CD4-positive, alpha-beta memory T cell (primary cell): ENCODE measurements at regions of chr1 and their contacts with region 1.

Region 1: DNA sequence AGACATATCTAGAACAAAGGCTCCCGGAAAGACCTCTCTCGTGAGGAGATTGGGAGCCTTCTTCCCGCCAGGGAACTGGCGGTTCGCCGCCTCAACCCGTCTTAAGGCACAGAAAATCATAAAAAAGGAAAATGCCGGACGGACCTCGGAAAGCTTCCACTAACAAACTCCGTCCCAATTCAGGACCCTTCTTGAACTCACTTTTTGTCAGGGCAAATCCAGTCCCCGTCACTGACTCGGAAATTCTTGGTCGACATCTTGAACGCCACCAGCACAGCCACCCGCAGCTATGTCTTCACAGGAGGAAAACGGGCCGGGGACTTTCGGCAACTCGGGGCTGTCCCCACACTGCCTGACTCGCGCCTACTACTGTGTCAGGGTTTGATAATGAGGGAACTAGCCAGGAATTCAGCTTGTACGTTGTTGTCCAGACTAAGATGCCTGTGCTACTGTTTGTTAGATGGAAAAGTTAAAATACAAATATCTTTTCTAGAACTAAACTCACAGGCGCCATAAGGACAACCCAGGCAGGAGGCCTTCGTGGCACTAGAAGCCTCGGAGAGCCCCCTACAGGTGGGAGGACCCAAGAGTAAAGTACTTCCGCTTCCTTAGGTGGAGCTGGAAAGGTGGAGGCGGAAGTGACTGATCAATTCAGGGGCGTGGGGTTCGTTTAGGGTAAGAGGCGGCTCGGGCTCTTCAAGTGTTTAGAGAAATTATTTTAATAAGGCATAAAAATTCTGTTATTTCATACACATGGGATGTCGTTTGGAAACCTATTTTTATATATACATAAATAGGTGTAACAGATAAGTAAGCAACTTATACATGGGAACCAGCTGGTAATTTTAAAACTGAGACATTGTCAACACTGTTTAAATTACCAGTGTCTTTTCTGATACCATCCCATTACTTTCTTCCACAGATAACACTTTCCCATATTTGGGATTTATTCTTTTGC is at the start of gene ZRANB2:
- DNase-seq: peak; percentile 93 to 96 (median 95)
- H3K4me3 ChIP-seq: peak within 1 kb of the TSS; percentile 62 to 95
- H3K4me3 Mint-ChIP-seq: peak within 1 kb of the TSS; percentile 91 to 100 (median 99)
- H3K27ac ChIP-seq: peak within 1 kb of the TSS; percentile 95
- H3K27ac Mint-ChIP-seq: peak within 1 kb of the TSS; percentile 97 to 100 (median 99)
- H3K4me1 ChIP-seq: peaks cover 29% of the 10 kb centered on the region
- H3K4me1 Mint-ChIP-seq: peaks cover 18 to 44% (median 27%) of the 10 kb centered on the region in 4 donors
- H3K27me3 ChIP-seq: no peaks in the 10 kb centered on the region
- H3K27me3 Mint-ChIP-seq: peaks cover 2 to 3% of the 10 kb centered on the region in 2 donors
- total RNA-seq, gene ZRANB2: 158 to 159 TPM

Region 2: GRCh38 chr1:70205434-70206118 is 875.4 kb before region 1 on chr1 and contains the start of gene LRRC40:
- CTCF ChIA-PET with region 1: interaction called, 7 read pairs
- POLR2A ChIA-PET with region 1: interaction called, 17 read pairs
- intact Hi-C with region 1: loop called (anchors 1 kb)
- DNase-seq: peak; percentile 95 to 98 (median 95)
- H3K4me3 ChIP-seq: peak within 1 kb of the TSS; percentile 68 to 93
- H3K4me3 Mint-ChIP-seq: peak within 1 kb of the TSS; percentile 97 to 99 (median 98)
- H3K27ac ChIP-seq: peak within 1 kb of the TSS; percentile 97
- H3K27ac Mint-ChIP-seq: peak within 1 kb of the TSS; percentile 99 to 100 (median 100)
- H3K4me1 ChIP-seq: peaks cover 71% of the 10 kb centered on the region
- H3K4me1 Mint-ChIP-seq: peaks cover 40 to 89% (median 62%) of the 10 kb centered on the region in 4 donors
- H3K27me3 ChIP-seq: no peaks in the 10 kb centered on the region
- H3K27me3 Mint-ChIP-seq: no peaks in the 10 kb centered on the region
- total RNA-seq, gene LRRC40: 11.3 to 11.6 TPM

Region 3: DNA sequence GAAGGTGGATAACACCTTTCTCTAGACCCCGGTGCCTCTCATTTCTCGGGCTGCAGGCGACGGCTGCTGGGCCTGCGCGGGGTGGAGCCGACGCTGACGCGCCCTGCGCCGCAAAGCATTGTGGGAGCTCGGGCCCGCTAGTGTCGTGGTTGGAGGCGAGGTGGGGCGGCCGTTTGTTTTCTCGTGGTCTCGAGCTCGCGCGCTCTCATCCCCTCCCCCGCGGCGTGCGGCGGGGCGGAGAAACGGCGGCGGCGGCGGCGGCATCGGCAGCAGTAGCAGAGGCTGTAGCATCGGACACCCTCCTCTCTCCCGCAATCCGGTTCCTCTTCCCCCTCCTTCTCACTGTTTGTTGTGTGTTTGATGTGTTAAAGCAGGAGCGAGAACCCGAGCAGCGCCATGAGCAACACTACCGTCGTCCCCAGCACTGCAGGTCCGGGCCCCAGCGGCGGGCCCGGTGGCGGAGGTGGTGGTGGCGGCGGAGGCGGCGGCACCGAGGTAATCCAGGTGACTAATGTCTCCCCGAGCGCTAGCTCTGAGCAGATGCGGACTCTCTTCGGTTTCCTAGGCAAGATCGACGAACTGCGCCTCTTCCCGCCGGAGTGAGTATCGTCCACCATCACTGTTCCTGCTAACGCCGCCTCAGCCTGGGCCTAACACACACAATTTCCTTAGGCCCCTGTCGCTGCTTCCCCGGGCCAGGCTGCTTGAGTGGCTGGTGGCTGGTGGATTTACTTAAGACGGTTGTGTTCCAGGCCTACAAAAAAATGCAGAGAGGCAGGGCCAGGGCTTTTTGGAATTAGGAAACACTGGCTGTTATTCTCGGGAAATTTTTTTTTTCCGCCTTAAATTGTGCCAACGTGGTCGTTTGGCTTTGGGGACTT is 859.5 kb before region 1 on chr1 and contains the start of gene SRSF11:
- CTCF ChIA-PET with region 1: interaction called, 12 read pairs
- POLR2A ChIA-PET with region 1: interaction called, 8 read pairs
- intact Hi-C with region 1: loop called (anchors 1 kb)
- DNase-seq: peak; percentile 95 to 96 (median 95)
- H3K4me3 ChIP-seq: peak within 1 kb of the TSS; percentile 67 to 70
- H3K4me3 Mint-ChIP-seq: peak within 1 kb of the TSS; percentile 85 to 98 (median 91)
- H3K27ac ChIP-seq: peak within 1 kb of the TSS; percentile 95
- H3K27ac Mint-ChIP-seq: peak within 1 kb of the TSS; percentile 92 to 99 (median 96)
- H3K4me1 ChIP-seq: peaks cover 49% of the 10 kb centered on the region
- H3K4me1 Mint-ChIP-seq: peaks cover 24 to 57% (median 44%) of the 10 kb centered on the region in 4 donors
- H3K27me3 ChIP-seq: no peaks in the 10 kb centered on the region
- H3K27me3 Mint-ChIP-seq: no peaks in the 10 kb centered on the region
- total RNA-seq, gene SRSF11: 359 to 374 TPM

Region 4: DNA sequence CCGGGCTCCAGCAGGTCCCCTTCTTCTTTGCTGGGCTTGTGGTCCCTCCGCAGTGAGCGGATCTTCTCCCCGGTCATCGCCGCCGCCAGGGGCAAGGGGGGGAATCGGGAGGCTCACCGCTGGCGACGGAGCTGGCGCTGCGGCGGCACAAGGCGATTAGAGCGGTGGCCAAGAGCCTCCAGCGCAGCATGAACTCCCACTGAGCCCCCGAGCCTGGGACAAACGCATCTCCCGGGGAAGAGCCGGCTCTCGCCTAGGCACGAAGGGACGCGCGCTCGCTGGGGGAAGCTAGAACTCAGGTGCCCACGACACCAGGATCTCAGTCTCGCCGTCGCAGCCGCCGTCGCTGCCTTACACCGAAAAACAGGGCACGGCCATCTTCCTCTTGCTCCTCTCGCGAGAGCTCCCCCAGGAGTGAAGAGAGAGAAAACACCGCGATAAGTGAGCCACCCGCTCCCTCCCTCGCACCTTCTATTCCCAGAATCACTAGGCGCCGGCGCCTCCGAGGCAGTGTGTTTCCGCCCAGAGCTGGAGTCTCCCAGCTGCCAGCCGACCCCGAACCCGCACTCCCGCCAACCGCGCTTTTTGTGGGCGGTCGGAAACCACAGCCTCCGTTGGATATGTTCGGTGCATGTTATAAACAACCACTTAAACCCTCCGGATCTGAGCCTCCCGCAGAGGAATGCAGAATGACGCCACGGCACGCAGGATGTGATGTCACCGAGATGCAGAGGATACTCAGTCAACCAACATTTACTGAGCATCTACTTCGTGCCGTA is 726.5 kb before region 1 on chr1 and contains the start of gene ANKRD13C:
- CTCF ChIA-PET with region 1: no interaction called
- POLR2A ChIA-PET with region 1: interaction called, 16 read pairs
- intact Hi-C with region 1: loop called (anchors 1 kb)
- DNase-seq: peak; percentile 94 to 97 (median 95)
- H3K4me3 ChIP-seq: peak within 1 kb of the TSS; percentile 15 to 89
- H3K4me3 Mint-ChIP-seq: peak within 1 kb of the TSS; percentile 90 to 99 (median 95)
- H3K27ac ChIP-seq: peak within 1 kb of the TSS; percentile 92
- H3K27ac Mint-ChIP-seq: peak within 1 kb of the TSS; percentile 96 to 100 (median 99)
- H3K4me1 ChIP-seq: peaks cover 45% of the 10 kb centered on the region
- H3K4me1 Mint-ChIP-seq: peaks cover 24 to 53% (median 41%) of the 10 kb centered on the region in 4 donors
- H3K27me3 ChIP-seq: no peaks in the 10 kb centered on the region
- H3K27me3 Mint-ChIP-seq: no peaks in the 10 kb centered on the region
- total RNA-seq, gene ANKRD13C: 29.1 to 34.0 TPM

Region 5: DNA sequence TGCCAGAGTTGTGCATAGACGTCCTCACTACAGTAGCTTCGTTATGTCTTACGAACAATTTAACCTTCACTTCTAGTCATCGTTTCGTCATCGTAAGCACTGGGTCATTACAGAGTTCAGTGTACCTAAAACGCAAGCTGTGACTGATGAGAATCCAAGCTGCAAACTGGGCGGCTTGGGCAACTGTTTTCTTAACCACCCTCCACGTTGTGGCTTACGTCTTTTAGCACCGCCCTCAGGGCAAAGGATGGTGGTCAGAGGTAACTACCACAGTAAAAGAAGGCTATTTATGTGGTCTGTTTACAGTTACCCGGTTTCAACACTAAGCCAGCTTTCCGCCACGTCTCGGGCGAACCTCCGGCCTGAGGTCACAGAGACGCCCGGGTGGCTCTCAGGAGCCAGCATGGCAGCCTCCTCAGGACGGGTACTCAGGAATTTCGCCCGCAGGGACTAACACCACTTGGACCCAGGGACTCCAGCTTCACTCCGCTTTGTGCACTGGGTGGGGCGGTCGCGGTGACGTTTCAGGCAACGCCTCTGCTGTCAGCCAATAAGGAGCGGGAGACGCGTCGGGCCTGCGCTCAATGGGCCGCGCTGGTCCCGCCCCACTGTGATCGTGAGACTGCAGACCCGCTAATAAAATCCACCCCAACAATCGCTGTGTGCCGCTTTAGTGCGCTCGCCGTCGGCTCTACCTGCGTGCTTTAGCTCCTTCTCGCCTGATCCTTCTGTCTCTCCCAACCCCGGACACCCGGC is 670.2 kb before region 1 on chr1 and contains the start of gene CTH:
- CTCF ChIA-PET with region 1: no interaction called
- POLR2A ChIA-PET with region 1: interaction called, 15 read pairs
- intact Hi-C with region 1: loop called (anchors 1 kb)
- DNase-seq: peak; percentile 91 to 95 (median 93)
- H3K4me3 ChIP-seq: peak within 1 kb of the TSS; percentile 64 to 66
- H3K4me3 Mint-ChIP-seq: peak within 1 kb of the TSS; percentile 90 to 99 (median 97)
- H3K27ac ChIP-seq: peak within 1 kb of the TSS; percentile 77
- H3K27ac Mint-ChIP-seq: peak within 1 kb of the TSS; percentile 94 to 99 (median 96)
- H3K4me1 ChIP-seq: peaks cover 16% of the 10 kb centered on the region
- H3K4me1 Mint-ChIP-seq: peaks cover 13 to 22% (median 18%) of the 10 kb centered on the region in 4 donors
- H3K27me3 ChIP-seq: no peaks in the 10 kb centered on the region
- H3K27me3 Mint-ChIP-seq: peaks cover 0 to 3% of the 10 kb centered on the region in 2 donors
- total RNA-seq, gene CTH: 2.0 to 2.9 TPM

Region 6: DNA sequence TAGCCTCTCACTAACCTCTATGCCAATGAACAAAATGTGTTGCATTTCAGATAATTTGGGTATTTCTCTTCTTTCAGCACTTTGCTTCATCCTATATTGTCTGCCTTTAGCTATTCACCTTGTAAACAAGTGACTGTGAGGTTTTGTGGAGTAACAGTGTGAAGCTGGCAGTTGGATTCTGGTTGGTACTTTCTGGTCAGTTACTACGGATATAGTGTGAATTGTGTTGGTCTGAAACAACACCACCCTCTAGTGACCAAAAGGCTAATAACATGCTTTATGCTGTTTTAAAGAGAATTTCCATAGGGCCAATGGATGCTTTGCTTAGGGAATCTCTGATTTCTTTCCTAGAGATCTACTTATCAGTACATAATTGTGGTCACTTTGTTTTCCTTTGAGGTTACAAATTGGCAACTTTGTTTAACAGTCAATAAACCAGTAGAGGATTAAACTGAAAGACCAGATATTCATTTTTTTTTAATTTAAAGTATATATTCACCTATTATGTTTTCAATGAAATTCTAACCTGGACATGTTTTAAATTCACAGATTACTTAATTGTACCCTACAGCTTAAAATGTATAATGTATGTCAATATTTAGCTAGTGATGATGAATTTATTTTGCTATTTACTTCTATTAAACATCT is 30.9 kb before region 1 on chr1:
- CTCF ChIA-PET with region 1: interaction called, 3 read pairs
- POLR2A ChIA-PET with region 1: interaction called, 4 read pairs
- intact Hi-C with region 1: loop called (anchors 2 kb)
- DNase-seq: peak in 4 of 5 donors; percentile 32 to 46 (median 42)
- H3K4me3 ChIP-seq: no peak overlapping the region
- H3K4me3 Mint-ChIP-seq: peak overlapping the region in 1 of 8 donors; percentile 7
- H3K27ac ChIP-seq: no peak overlapping the region
- H3K27ac Mint-ChIP-seq: no peak overlapping the region
- H3K4me1 ChIP-seq: peaks cover 17% of the 10 kb centered on the region
- H3K4me1 Mint-ChIP-seq: peaks cover 12 to 23% (median 19%) of the 10 kb centered on the region in 4 donors
- H3K27me3 ChIP-seq: peaks cover 30% of the 10 kb centered on the region
- H3K27me3 Mint-ChIP-seq: peaks cover 23 to 33% of the 10 kb centered on the region in 2 donors